ENCODE measurements at regions of chr11 and their contacts with region 1.

Region 1: DNA sequence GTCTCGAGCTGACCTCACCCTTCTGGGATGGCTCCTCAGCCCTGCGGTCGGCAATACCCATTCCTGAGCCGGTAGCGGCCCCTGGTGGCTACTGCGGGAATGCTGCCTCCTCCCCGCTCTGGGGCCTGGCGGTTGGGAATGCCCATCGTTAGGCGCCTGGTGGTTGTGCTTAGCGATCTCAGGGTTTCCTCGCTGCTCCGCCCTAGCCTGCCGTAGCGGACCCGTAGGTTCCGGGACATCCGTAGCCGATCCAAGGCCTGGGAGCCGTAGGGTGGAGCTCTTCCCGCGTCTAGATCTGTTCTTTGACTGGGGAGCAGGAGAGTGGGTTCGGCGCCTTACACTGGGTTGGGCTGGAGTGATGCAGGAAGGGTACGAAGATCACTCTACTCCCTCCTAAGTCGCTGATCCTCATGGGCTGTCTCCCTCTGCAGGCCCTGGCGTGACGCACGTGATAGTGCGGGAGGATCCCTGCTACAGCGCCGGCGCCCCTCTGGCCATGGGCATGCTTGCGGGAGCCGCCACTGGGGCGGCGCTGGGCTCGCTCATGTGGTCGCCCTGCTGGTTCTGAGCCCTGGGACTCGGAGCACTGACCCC is 14.8 kb downstream of the PLEKHB1 start:
- DNase-seq: peak; percentile 67 to 91 (median 80)
- ATAC-seq: peak; percentile 97
- H3K4me3 ChIP-seq: no peak overlapping the region
- H3K4me3 Mint-ChIP-seq: peak overlapping the region in 5 of 10 donors; percentile 29 to 58 (median 36)
- H3K27ac ChIP-seq: no peak overlapping the region
- H3K27ac Mint-ChIP-seq: peak overlapping the region in 4 of 9 donors; percentile 14 to 41 (median 34)
- H3K4me1 ChIP-seq: peaks cover 5 to 15% of the 10 kb centered on the region in 2 donors
- H3K4me1 Mint-ChIP-seq: peaks cover 13 to 32% (median 23%) of the 10 kb centered on the region in 7 donors
- H3K27me3 ChIP-seq: no peaks in the 10 kb centered on the region
- H3K27me3 Mint-ChIP-seq: no peaks in the 10 kb centered on the region

Region 2: DNA sequence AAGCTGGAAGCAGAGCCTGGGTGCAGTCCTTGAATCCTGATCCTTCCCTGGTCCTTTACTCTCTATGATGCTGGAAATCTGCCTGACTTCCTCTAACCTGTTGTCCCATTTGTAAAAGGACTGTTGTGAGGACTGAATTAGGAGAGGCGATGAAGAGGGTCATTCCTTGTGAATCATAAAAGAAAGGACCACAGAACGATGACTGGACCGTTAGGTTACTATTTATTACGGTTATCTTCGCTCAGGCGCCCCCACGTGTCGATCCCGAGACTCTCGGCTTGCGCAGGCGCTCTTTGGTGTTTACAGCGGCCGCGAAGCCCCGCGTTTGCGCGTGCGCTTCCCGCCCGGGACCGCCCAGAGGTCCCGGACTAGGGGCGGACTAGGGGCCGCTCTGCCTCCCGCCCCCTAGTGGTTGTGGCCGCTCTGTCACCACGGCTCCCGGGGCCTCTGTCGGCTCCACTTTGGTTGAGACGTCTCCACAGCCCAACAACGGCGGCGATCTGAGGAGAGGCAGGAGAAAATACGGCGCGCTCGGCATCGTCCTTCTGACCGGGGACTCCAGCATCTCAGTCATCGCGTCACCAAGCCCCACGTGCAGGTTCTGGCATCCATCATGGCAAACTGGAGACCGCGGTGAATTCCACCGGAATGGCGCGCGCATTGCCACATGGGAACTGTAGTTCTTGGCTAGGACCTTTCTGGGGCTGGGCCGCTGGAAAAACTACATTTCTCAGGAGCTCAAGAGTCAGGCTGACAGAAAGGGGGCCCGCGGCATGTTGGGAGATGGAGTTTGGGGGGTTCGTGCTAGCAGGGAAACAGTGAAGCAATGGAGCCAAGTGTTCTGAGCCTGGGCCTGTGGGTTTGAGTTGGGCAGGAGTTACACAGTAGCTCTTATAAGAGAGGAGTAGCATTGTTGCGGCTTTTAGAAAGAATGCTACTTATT is 867.4 kb before region 1 on chr11 and contains the start of gene STARD10:
- CTCF ChIA-PET with region 1: no interaction called
- POLR2A ChIA-PET with region 1: no interaction called
- intact Hi-C with region 1: no loop called
- DNase-seq: peak; percentile 90 to 97 (median 96)
- ATAC-seq: peak; percentile 97
- H3K4me3 ChIP-seq: peak within 1 kb of the TSS; percentile 89
- H3K4me3 Mint-ChIP-seq: peak within 1 kb of the TSS; percentile 78 to 100 (median 98)
- H3K27ac ChIP-seq: peak within 1 kb of the TSS; percentile 99
- H3K27ac Mint-ChIP-seq: peak within 1 kb of the TSS; percentile 99 to 100 (median 99)
- H3K4me1 ChIP-seq: peaks cover 16 to 18% of the 10 kb centered on the region in 2 donors
- H3K4me1 Mint-ChIP-seq: peaks cover 19 to 35% (median 28%) of the 10 kb centered on the region in 7 donors
- H3K27me3 ChIP-seq: no peaks in the 10 kb centered on the region
- H3K27me3 Mint-ChIP-seq: no peaks in the 10 kb centered on the region
- total RNA-seq, gene STARD10: 10.9 to 26.1 (median 16.4) TPM

Region 3: GRCh38 chr11:73307323-73308002 is 353.7 kb before region 1 on chr11:
- CTCF ChIA-PET with region 1: no interaction called
- POLR2A ChIA-PET with region 1: no interaction called
- intact Hi-C with region 1: loop called (anchors 2 to 5 kb)
- DNase-seq: peak; percentile 75 to 90 (median 86)
- ATAC-seq: peak; percentile 83
- H3K4me3 ChIP-seq: peak overlapping the region; percentile 63
- H3K4me3 Mint-ChIP-seq: peak overlapping the region; percentile 83 to 95 (median 91)
- H3K27ac ChIP-seq: no peak overlapping the region
- H3K27ac Mint-ChIP-seq: peak overlapping the region in 5 of 9 donors; percentile 9 to 68 (median 31)
- H3K4me1 ChIP-seq: peaks cover 4 to 5% of the 10 kb centered on the region in 2 donors
- H3K4me1 Mint-ChIP-seq: peaks cover 8 to 13% (median 11%) of the 10 kb centered on the region in 7 donors
- H3K27me3 ChIP-seq: peaks cover 0 to 4% of the 10 kb centered on the region in 2 donors
- H3K27me3 Mint-ChIP-seq: peaks cover 14 to 55% (median 21%) of the 10 kb centered on the region in 5 donors

Region 4: GRCh38 chr11:73404048-73404447 is 257.1 kb before region 1 on chr11:
- CTCF ChIA-PET with region 1: interaction called, 13 read pairs
- POLR2A ChIA-PET with region 1: no interaction called
- intact Hi-C with region 1: loop called (anchors 1 to 2 kb)
- DNase-seq: no peak
- ATAC-seq: peak; percentile 50
- H3K4me3 ChIP-seq: no peak overlapping the region
- H3K4me3 Mint-ChIP-seq: no peak overlapping the region
- H3K27ac ChIP-seq: no peak overlapping the region
- H3K27ac Mint-ChIP-seq: peak overlapping the region in 2 of 9 donors; percentile 42 to 54
- H3K4me1 ChIP-seq: no peaks in the 10 kb centered on the region
- H3K4me1 Mint-ChIP-seq: peaks cover 0 to 9% (median 0%) of the 10 kb centered on the region in 7 donors
- H3K27me3 ChIP-seq: no peaks in the 10 kb centered on the region
- H3K27me3 Mint-ChIP-seq: no peaks in the 10 kb centered on the region

Region 5: GRCh38 chr11:73625696-73626318 is 35.3 kb before region 1 on chr11:
- CTCF ChIA-PET with region 1: interaction called, 190 read pairs
- POLR2A ChIA-PET with region 1: interaction called, 20 read pairs
- intact Hi-C with region 1: loop called (anchors 1 kb)
- DNase-seq: peak; percentile 38 to 75 (median 66)
- ATAC-seq: peak; percentile 88
- H3K4me3 ChIP-seq: no peak overlapping the region
- H3K4me3 Mint-ChIP-seq: peak overlapping the region in 1 of 10 donors; percentile 68
- H3K27ac ChIP-seq: no peak overlapping the region
- H3K27ac Mint-ChIP-seq: peak overlapping the region in 1 of 9 donors; percentile 59
- H3K4me1 ChIP-seq: peaks cover 0 to 3% of the 10 kb centered on the region in 2 donors
- H3K4me1 Mint-ChIP-seq: peaks cover 0 to 15% (median 0%) of the 10 kb centered on the region in 7 donors
- H3K27me3 ChIP-seq: no peaks in the 10 kb centered on the region
- H3K27me3 Mint-ChIP-seq: peaks cover 13 to 29% (median 27%) of the 10 kb centered on the region in 5 donors

Region 6: GRCh38 chr11:73647459-73648100 is 13.6 kb before region 1 on chr11:
- CTCF ChIA-PET with region 1: interaction called, 18 read pairs
- POLR2A ChIA-PET with region 1: interaction called, 5 read pairs
- intact Hi-C with region 1: no loop called
- DNase-seq: peak; percentile 81 to 96 (median 94)
- ATAC-seq: peak; percentile 100
- H3K4me3 ChIP-seq: peak overlapping the region; percentile 62
- H3K4me3 Mint-ChIP-seq: peak overlapping the region; percentile 71 to 96 (median 92)
- H3K27ac ChIP-seq: peak overlapping the region; percentile 71
- H3K27ac Mint-ChIP-seq: peak overlapping the region; percentile 83 to 98 (median 94)
- H3K4me1 ChIP-seq: peaks cover 7 to 15% of the 10 kb centered on the region in 2 donors
- H3K4me1 Mint-ChIP-seq: peaks cover 10 to 41% (median 34%) of the 10 kb centered on the region in 7 donors
- H3K27me3 ChIP-seq: no peaks in the 10 kb centered on the region
- H3K27me3 Mint-ChIP-seq: peaks cover 0 to 8% (median 0%) of the 10 kb centered on the region in 5 donors

Measured in naive thymus-derived CD4-positive, alpha-beta T cell (primary cell).